ENCODE measurements at regions of chr17 and their contacts with region 1.

Region 1: GRCh38 chr17:59331129-59331928 is at the start of gene YPEL2:
- DNase-seq: peak; percentile 89
- ATAC-seq: peak; percentile 92
- H3K4me3 Mint-ChIP-seq: peak within 1 kb of the TSS; percentile 88
- H3K27ac Mint-ChIP-seq: peak within 1 kb of the TSS; percentile 86
- H3K4me1 Mint-ChIP-seq: peaks cover 59% of the 10 kb centered on the region
- H3K27me3 Mint-ChIP-seq: peaks cover 3% of the 10 kb centered on the region
- total RNA-seq, gene YPEL2: 9.0 to 10.0 TPM

Region 2: DNA sequence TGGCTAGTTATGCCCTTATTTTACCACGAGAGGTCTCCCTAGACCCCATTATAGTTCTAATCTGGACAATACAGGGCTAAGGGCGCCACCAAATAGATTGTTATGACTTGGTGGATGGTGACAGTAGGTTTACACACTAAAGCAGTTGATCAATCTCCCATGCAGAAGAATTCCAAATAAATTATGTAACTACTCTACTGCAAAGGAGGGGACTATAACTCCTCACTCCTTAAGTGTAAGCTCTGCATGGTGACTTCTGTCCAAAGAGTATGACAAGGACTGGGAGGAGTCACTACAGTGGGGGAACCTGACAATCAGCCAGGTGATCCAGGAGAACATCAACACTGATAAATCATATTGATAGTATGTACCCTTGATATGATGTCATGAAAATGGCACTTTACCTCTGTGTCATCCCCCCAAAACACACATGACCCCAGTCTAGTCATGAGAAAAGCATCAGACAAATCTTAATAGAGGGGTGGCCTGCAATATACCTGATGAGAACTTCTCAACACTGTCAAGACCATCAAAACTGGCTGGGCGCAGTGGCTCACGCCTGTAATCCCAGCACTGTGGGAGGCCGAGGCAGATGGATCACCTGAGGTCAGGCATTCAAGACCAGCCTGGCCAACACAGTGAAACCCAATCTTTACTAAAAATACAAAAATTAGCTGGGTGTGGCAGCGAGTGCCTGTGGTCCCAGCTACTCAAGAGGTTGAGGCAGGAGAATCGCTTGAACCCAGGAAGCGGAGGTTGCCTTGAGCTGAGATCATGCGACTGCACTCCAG is 20.0 kb before region 1 on chr17:
- CTCF ChIA-PET with region 1: interaction called, 23 read pairs
- POLR2A ChIA-PET with region 1: no interaction called
- DNase-seq: peak; percentile 66
- ATAC-seq: peak; percentile 95
- H3K4me3 Mint-ChIP-seq: no peak overlapping the region
- H3K27ac Mint-ChIP-seq: no peak overlapping the region
- H3K4me1 Mint-ChIP-seq: peaks cover 6% of the 10 kb centered on the region
- H3K27me3 Mint-ChIP-seq: no peaks in the 10 kb centered on the region

Region 3: GRCh38 chr17:59361916-59362810 is 30.8 kb after region 1 on chr17:
- CTCF ChIA-PET with region 1: interaction called, 31 read pairs
- POLR2A ChIA-PET with region 1: interaction called, 9 read pairs
- DNase-seq: peak; percentile 67
- ATAC-seq: peak; percentile 48
- H3K4me3 Mint-ChIP-seq: peak overlapping the region; percentile 69
- H3K27ac Mint-ChIP-seq: peak overlapping the region; percentile 89
- H3K4me1 Mint-ChIP-seq: peaks cover 88% of the 10 kb centered on the region
- H3K27me3 Mint-ChIP-seq: no peaks in the 10 kb centered on the region

Region 4: DNA sequence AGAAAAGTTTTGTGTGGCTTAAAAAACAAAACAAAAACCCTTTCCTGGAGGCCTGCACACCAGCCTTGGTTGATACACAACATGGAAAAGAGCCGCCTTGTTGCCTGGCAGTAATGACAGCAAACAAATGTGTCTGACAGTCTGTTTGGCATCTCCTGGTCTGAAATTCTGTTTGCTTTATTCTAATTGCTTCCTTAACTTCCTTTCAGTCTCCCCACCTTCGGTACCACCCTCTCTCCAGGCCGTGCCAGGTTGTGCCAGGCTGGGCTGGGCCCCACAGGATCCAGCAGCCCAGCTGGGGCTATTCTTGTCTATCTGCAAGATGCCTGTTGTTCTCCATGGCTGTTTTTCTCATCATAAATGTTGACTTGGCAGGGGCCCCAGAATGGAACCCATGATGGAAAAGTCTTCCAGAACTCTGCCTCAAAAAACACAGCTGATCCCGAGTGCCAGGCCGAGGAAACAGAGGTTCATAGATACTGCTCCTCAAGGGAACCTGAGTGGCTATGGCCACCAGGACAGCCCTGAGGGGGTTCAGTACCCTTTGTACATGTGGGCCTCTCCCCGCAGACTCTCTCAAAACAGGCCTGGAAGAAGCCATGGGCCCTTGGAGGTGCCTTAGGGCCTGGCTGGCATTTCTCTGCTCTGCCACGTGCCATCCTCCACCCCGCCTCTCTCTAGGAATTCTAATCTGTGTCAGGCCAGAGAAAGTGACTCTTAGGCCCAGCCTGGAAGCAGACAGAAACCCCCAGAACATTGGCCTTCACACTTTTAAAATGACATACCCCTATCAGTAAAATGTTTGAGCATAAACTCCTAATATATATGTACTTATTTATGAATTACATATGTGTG is 50.6 kb after region 1 on chr17:
- CTCF ChIA-PET with region 1: interaction called, 10 read pairs
- POLR2A ChIA-PET with region 1: interaction called, 3 read pairs
- DNase-seq: no peak
- ATAC-seq: no peak
- H3K4me3 Mint-ChIP-seq: no peak overlapping the region
- H3K27ac Mint-ChIP-seq: peak overlapping the region; percentile 70
- H3K4me1 Mint-ChIP-seq: peaks cover 18% of the 10 kb centered on the region
- H3K27me3 Mint-ChIP-seq: no peaks in the 10 kb centered on the region

Region 5: DNA sequence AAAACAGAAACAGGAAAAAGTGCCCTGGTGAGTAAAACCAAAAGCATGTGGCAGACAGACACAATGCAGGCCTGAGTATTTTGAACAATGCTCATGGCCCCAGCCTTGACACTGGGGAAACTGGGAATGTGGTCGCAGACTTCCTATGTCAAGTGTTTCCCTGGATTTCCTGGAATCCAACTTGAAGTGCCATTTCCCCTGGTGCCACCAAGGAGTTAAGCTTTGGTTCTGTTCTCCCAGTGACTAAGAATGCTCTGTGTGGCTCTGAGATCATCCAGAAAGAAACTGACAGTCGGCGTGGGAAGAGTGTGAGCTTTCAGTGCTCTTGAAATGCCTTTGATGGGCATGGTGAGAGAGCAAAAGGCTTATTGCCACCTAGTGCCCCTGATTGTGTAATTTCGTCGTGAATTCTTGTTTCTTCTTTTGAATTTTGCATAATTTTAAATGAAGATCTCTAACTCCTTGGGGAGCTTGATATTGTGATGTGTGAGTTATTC is 96.1 kb after region 1 on chr17:
- CTCF ChIA-PET with region 1: interaction called, 318 read pairs
- POLR2A ChIA-PET with region 1: no interaction called
- DNase-seq: peak; percentile 33
- ATAC-seq: no peak
- H3K4me3 Mint-ChIP-seq: no peak overlapping the region
- H3K27ac Mint-ChIP-seq: peak overlapping the region; percentile 0
- H3K4me1 Mint-ChIP-seq: peaks cover 22% of the 10 kb centered on the region
- H3K27me3 Mint-ChIP-seq: no peaks in the 10 kb centered on the region

Measured in activated CD8-positive, alpha-beta T cell treated with anti-CD3 and anti-CD28 coated beads, Interleukin-2, amount 10 ng/mL, durations not matched to agents 7 days and 5 days (primary cell).